Motor neuron (in vitro differentiated cells): ENCODE measurements at regions of chr11 and their contacts with region 1.

Region 1: GRCh38 chr11:45102810-45103621 is 43.4 kb upstream of the PRDM11 start:
- ATAC-seq: peak; percentile 11 to 55 (median 27)
- H3K4me3 ChIP-seq: no peak overlapping the region
- H3K27ac ChIP-seq: no peak overlapping the region
- H3K4me1 ChIP-seq: peaks cover 6 to 12% of the 10 kb centered on the region in 2 donors

Region 2: DNA sequence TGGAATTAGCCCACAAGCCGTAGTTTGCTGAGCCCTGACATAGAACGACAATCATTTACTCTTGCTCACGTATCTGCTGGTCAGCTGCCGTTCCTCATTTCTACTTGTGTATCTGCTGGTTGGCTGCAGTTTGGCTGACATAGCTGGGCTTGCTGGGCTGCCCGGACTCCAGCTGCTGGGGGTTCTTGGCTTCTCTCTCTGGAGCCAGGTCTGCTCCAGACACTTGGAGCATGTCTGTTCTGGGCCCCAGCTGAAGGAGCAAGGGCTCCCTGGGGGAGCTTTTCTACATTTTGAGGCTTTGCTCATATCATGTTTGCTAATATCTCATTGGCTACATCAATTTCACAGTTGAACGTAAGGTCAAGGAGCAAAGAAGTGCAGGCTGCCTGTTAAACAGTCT is 90.7 kb after region 1 on chr11:
- in situ Hi-C with region 1: no loop called
- ATAC-seq: no peak
- H3K4me3 ChIP-seq: no peak overlapping the region
- H3K27ac ChIP-seq: no peak overlapping the region
- H3K4me1 ChIP-seq: peaks cover 0 to 5% of the 10 kb centered on the region in 2 donors

Region 3: DNA sequence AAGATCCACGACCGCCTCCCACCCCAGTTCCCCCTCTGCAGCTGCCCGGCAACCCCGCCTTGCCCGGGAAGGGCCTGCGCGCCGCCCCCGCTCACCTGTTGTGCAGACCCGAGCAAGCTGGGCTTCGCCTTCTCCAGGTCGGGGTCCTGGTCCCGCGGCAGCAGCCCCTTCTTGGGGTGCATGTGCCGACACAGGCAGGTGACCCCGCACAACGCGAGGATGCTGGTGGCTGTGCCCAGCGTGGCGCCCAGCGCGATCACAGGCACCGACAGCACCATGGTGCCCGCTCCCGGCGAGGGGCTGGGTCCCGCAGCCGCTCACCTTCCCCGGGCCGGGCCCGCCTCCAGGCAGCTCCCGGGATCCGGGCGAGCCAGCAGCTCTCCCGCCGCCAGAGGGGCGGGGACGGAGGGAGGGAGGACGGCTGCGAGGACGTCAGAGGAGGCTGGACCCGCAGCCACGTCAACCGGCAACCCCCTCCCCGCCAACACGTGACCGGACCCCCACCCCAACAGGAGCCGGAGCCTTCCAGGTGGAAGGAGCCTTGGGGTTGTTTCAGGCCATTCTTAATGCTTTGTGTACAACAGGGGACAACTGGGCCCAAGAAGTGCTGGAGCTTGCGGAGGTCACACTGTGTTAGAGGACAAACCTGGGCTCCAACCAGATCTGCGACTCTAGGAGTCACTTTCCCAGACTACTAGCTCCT is 183.1 kb after region 1 on chr11 and contains the start of gene SYT13:
- in situ Hi-C with region 1: loop called in 6 of 9 experiments (anchors 10 to 25 kb)
- ATAC-seq: peak; percentile 68 to 94 (median 91)
- H3K4me3 ChIP-seq: peak within 1 kb of the TSS; percentile 61 to 94 (median 78)
- H3K27ac ChIP-seq: peak within 1 kb of the TSS; percentile 51 to 81
- H3K4me1 ChIP-seq: peaks cover 39 to 70% of the 10 kb centered on the region in 2 donors
- total RNA-seq, gene SYT13: 9.1 to 54.7 (median 44.8) TPM in 5 of 8 experiments, not detected in the others

Region 4: DNA sequence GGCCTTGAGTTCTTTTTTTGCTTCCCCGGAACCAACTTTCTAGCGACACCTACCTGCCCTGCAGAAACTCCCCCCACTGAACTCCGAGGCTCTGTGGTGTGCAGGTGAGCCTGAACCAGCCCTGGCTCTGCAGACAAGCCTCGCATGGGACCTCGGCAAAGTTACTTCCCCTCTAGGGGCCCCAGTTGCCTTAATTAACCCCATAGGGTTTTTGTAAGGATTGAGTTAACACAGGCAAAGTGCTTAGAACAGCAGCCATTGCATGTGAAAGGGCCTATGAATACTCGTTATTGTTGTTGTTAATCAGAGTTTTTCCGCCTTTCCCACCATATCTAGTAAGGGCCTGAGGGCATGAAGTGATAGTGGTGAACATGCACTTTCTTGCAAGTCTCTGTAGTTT is 195.7 kb after region 1 on chr11:
- in situ Hi-C with region 1: loop called in 6 of 9 experiments (anchors 10 to 25 kb)
- ATAC-seq: no peak
- H3K4me3 ChIP-seq: no peak overlapping the region
- H3K27ac ChIP-seq: no peak overlapping the region
- H3K4me1 ChIP-seq: no peaks in the 10 kb centered on the region

Region 5: DNA sequence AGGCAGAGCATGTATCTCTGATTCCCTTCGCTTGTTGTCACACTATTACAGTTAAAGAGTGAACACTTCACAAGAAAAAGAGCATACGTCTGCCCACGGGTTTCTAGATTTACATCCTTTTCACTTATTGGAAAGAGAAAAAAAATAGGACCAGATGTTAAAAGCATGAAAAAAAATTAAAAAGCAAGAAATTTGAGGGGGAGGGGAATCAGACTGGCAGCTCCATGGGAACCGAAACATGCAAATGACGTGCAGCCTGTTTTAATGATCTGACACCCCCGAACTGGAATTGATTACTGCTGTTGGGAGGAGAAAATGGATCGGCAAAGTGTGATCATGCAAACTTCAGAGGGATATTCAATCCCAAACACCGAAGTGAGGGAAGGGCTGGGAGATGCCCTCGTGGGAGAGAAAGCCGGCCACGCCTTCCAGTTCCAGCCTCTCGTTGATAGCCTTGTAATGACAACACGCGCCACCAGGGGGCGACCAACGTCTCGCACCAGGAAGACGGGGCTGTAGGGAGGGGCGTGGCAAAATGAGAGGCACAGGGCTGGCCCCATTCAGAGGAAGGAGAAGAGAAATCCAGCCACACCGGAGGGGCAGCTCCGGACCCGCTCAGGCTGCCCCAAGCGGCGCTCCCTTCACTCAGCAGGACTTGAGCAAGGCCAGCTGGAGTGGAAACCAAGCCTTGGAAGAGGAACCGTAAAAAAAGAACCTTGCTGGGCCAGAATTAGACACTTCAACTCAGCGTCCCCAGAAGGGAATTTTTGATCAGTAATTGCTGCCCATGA is 236.9 kb after region 1 on chr11:
- in situ Hi-C with region 1: no loop called
- ATAC-seq: peak; percentile 83 to 99 (median 96)
- H3K4me3 ChIP-seq: peak overlapping the region in 1 of 5 donors; percentile 8
- H3K27ac ChIP-seq: no peak overlapping the region
- H3K4me1 ChIP-seq: peaks cover 31 to 52% of the 10 kb centered on the region in 2 donors